HEK293 (cell line): ENCODE measurements at regions of chr6 and their contacts with region 1.

Region 1: DNA sequence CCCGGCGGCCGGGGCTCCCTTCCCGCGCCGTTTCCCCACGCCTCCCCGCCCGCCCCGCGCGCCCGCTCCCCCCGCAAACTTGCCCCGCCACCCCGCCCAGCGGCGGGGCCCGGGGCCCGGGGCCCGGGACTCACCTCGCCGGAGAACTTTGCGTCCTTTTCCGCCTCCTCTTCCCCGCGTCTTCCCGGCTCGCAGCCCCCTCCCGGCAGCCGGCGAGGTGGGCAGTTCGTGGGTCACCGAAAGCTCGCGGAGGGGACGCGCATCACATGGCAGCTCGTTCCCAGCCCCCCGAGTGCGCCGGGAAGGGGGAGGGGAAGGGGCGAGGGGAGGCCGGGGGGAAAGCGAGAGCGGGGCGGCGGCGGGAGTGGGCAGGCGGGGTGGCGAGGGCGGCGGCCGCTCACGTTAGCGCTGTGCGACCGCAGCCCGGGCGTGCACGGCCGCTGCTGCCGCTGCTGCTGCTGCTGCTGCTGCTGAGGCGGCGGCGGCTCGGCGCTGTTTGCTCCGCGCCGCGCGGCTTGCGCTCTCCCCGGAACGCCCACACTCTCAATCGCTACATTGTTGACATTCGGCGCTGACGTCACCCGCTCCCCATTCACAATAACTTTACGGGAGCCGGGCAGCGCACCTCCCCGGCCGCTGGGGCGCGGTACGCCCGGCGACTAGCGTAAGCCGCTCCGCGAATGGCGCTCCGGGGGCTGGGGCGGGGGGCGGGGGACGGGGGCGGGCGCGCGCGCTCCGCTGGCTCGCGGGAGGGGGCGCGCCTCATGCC is at the start of gene BACH2:
- H3K4me3 ChIP-seq: peak within 1 kb of the TSS; percentile 82
- H3K27ac ChIP-seq: peak within 1 kb of the TSS; percentile 70; the same call in 1 of the 2 replicates
- H3K4me1 ChIP-seq: no peaks in the 10 kb centered on the region; the same call in 1 of the 2 replicates
- CTCF ChIP-seq: no peak

Region 2: DNA sequence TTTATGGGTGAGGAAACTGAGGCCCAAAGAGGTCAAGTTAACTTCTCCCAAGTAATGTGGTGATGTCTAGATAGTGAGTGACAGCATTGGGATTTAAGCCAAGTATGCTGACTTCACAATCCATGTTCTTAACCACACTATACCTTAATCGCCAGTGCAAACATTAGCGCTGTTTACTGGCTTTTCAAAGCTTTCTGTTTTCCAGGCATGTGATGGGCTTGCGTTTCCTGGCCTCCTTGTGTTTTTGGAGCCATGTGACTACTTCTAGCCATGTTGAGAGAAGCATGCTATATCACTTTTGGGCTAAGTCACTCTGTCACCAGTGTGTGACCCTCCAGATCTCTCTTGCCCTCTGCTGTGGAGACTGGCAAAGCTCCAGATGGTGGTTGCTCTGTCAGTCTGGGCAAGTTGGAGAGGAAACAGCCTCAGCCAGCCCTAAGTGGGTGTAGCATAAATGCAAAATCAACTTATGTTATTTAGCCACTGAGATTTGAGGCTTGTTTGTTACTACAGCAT is 786.7 kb before region 1 on chr6:
- CTCF ChIA-PET with region 1: no interaction called
- POLR2A ChIA-PET with region 1: no interaction called
- H3K4me3 ChIP-seq: no peak overlapping the region
- H3K27ac ChIP-seq: 0 out of 2 replicates have a peak overlapping the region, but pooled peaks have one; percentile 13
- H3K4me1 ChIP-seq: peaks cover 27% of the 10 kb centered on the region
- CTCF ChIP-seq: no peak

Region 3: DNA sequence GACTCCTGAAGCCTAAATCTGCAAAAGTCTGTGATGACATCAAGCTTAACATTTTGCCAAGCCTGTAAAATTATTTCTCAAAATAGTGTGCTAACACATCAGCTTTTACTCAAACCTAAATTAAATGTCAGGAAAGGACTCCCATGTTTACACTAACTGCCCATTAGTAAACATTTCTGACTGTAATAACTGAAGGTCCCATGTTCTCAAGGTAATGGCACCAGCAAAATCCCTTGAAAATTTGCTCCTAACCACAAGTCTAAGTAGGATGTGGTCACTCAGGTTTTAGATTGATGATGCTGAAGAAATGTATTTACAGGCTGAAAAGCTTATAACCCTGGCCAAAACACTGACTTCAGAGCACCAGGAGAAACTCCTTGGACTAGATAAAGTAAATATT is 32.9 kb before region 1 on chr6:
- CTCF ChIA-PET with region 1: no interaction called
- POLR2A ChIA-PET with region 1: no interaction called
- H3K4me3 ChIP-seq: no peak overlapping the region
- H3K27ac ChIP-seq: no peak overlapping the region
- H3K4me1 ChIP-seq: peaks cover 4% of the 10 kb centered on the region; the same call in 1 of the 2 replicates
- CTCF ChIP-seq: no peak

Region 4: DNA sequence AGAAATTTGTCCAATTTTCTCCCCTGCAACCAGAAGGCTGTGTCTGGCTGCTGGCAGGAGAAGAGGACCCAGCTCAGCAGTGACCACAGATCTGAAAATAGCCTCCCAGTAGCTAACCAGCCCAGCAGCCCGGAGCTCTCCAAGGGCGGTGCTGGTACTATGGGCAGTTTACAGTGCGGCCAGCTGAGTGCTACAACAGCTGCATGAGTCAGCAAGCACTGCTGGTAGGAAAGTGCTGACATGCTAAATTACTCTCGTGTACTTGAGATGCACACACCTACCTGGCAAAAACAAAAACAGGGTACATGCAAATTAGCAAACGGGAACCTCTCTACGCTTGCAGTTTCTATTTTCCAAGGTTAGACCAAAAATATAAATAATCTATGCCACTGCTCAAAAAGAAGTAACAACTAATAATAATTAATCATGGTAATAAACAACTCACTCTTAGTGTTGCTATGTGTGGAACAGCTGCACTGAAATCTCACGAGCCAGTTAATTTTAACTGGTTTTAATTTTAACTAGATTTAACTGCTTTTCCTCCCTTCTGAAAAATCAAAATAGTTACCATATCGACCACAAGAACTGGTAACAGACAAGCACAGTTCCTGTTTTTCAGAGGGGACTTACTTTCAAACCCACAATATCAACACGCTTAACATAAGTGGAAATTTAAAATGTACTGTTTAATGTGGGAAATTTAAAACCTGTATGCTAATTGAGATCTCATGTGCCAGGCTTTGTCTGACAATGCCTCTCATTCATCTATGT is 10.7 kb before region 1 on chr6:
- CTCF ChIA-PET with region 1: interaction called, 10 read pairs
- POLR2A ChIA-PET with region 1: interaction called, 15 read pairs
- H3K4me3 ChIP-seq: 0 out of 2 replicates have a peak overlapping the region, but pooled peaks have one; percentile 2
- H3K27ac ChIP-seq: no peak overlapping the region
- H3K4me1 ChIP-seq: peaks cover 6% of the 10 kb centered on the region
- CTCF ChIP-seq: no peak

Region 5: GRCh38 chr6:90314514-90314913 is 18.0 kb after region 1 on chr6:
- CTCF ChIA-PET with region 1: no interaction called
- POLR2A ChIA-PET with region 1: no interaction called
- H3K4me3 ChIP-seq: no peak overlapping the region
- H3K27ac ChIP-seq: no peak overlapping the region
- H3K4me1 ChIP-seq: no peaks in the 10 kb centered on the region
- CTCF ChIP-seq: no peak